ENCODE measurements at regions of chr20 and their contacts with region 1.

Region 1: GRCh38 chr20:33810885-33811777 is at the start of gene CHMP4B:
- DNase-seq: peak; percentile 97 to 99 (median 99)
- ATAC-seq: peak; percentile 97
- H3K4me3 ChIP-seq: peak within 1 kb of the TSS; percentile 77
- H3K4me3 Mint-ChIP-seq: peak within 1 kb of the TSS; percentile 99
- H3K27ac ChIP-seq: peak within 1 kb of the TSS; percentile 58 to 73
- H3K27ac Mint-ChIP-seq: peak within 1 kb of the TSS; percentile 93
- H3K4me1 ChIP-seq: peaks cover 40% of the 10 kb centered on the region
- H3K4me1 Mint-ChIP-seq: peaks cover 47% of the 10 kb centered on the region
- H3K27me3 ChIP-seq: no peaks in the 10 kb centered on the region
- H3K27me3 Mint-ChIP-seq: no peaks in the 10 kb centered on the region
- CTCF ChIP-seq: no peak
- total RNA-seq, gene CHMP4B: 55.5 to 56.1 TPM

Region 2: DNA sequence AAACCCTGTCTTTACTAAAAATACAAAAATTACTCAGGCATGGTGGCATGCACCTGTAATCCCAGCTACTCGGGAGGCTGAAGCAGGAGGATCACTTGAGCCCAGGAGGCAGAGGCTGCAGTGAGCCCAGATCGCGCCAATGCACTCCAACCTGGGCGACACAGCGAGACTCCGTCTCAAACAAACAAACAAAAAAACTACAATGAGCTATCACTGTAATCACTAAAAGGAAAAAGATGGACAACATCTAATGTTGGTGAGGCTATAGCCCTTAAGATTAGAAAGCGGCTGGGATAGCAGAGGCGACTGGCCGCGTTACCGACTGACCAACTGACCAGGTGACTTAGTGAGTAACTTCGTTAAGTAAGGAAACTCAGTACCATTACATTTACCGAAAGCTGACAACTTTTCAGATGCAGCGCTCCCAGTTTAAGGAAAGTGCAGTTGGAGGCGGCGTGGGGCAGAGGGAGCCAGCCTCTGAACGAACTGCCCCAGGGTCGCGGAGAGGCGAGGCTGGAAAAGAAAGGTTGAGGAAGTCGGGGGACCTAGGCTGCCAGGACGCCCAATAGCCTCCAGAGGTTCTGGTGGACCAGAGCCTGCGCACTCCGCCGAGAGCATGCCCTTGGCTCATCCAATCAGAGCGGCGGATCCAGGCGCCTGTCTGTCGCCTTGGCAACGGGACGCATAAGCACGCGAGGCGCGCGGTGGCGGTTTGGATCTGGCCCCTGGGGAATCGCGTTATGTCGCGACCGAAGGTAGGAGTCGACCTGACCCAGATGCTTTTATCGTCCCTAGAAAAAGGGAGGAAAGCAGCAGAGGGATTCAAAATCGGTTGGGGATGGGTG is 1931.8 kb before region 1 on chr20:
- CTCF ChIA-PET with region 1: no interaction called
- POLR2A ChIA-PET with region 1: no interaction called
- intact Hi-C with region 1: loop called in 1 of 2 experiments (anchors 5 kb)
- DNase-seq: peak; percentile 50 to 90 (median 74)
- ATAC-seq: peak; percentile 84
- H3K4me3 ChIP-seq: peak overlapping the region; percentile 59 to 73
- H3K4me3 Mint-ChIP-seq: peak overlapping the region; percentile 91
- H3K27ac ChIP-seq: no peak overlapping the region
- H3K27ac Mint-ChIP-seq: peak overlapping the region; percentile 63
- H3K4me1 ChIP-seq: no peaks in the 10 kb centered on the region
- H3K4me1 Mint-ChIP-seq: peaks cover 11% of the 10 kb centered on the region
- H3K27me3 ChIP-seq: no peaks in the 10 kb centered on the region
- H3K27me3 Mint-ChIP-seq: peaks cover 3% of the 10 kb centered on the region
- CTCF ChIP-seq: no peak

Region 3: DNA sequence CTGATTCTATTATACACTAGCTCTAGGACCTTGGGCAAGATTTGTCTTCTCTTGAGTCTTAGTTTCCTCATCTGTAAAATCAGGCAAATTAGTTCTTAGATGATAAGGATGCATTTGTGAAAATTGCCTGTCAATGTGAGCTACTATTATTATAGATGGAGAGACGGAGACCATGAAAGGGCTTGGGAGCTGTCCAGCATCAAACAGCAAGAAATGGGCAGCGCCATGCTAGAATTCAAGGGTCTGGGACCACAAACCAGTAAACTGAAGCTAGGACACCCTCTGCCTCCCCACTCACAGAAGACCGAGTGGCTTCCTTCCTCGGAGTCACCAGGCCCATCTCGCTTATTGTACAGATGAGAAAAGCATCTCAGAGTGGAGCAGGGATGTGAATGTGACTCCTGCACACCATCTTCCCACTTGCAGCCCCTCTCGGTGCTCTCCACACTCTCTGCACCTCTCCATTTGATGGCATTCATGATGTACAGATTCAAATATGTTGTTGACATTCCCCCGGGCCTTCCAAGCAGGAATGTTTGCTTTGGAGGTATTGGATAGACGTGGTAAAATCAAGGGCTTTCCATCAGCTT is 618.1 kb before region 1 on chr20:
- CTCF ChIA-PET with region 1: no interaction called
- POLR2A ChIA-PET with region 1: no interaction called
- intact Hi-C with region 1: no loop called
- DNase-seq: no peak
- ATAC-seq: no peak
- H3K4me3 ChIP-seq: no peak overlapping the region
- H3K4me3 Mint-ChIP-seq: no peak overlapping the region
- H3K27ac ChIP-seq: no peak overlapping the region
- H3K27ac Mint-ChIP-seq: no peak overlapping the region
- H3K4me1 ChIP-seq: no peaks in the 10 kb centered on the region
- H3K4me1 Mint-ChIP-seq: no peaks in the 10 kb centered on the region
- H3K27me3 ChIP-seq: no peaks in the 10 kb centered on the region
- H3K27me3 Mint-ChIP-seq: peaks cover 6% of the 10 kb centered on the region
- CTCF ChIP-seq: no peak

Region 4: GRCh38 chr20:33443512-33444239 is 367.5 kb before region 1 on chr20 and contains the start of gene SNTA1:
- CTCF ChIA-PET with region 1: no interaction called
- POLR2A ChIA-PET with region 1: no interaction called
- intact Hi-C with region 1: loop called in 1 of 2 experiments (anchors 2 kb)
- DNase-seq: peak; percentile 67 to 90 (median 87)
- ATAC-seq: peak; percentile 69
- H3K4me3 ChIP-seq: peak within 1 kb of the TSS; percentile 85 to 97
- H3K4me3 Mint-ChIP-seq: peak within 1 kb of the TSS; percentile 94
- H3K27ac ChIP-seq: peak within 1 kb of the TSS; percentile 59 to 66
- H3K27ac Mint-ChIP-seq: peak within 1 kb of the TSS; percentile 92
- H3K4me1 ChIP-seq: peaks cover 16% of the 10 kb centered on the region
- H3K4me1 Mint-ChIP-seq: peaks cover 21% of the 10 kb centered on the region
- H3K27me3 ChIP-seq: no peaks in the 10 kb centered on the region
- H3K27me3 Mint-ChIP-seq: no peaks in the 10 kb centered on the region
- CTCF ChIP-seq: no peak
- total RNA-seq, gene SNTA1: 3.9 to 5.5 TPM

Region 5: GRCh38 chr20:33666293-33667244 is 144.6 kb before region 1 on chr20 and contains the start of gene ACTL10:
- CTCF ChIA-PET with region 1: no interaction called
- POLR2A ChIA-PET with region 1: no interaction called
- intact Hi-C with region 1: loop called in 1 of 2 experiments (anchors 1 kb)
- DNase-seq: peak; percentile 53 to 90 (median 78)
- ATAC-seq: peak; percentile 47
- H3K4me3 ChIP-seq: peak within 1 kb of the TSS; percentile 73 to 86
- H3K4me3 Mint-ChIP-seq: peak within 1 kb of the TSS; percentile 96
- H3K27ac ChIP-seq: peak within 1 kb of the TSS; percentile 25 to 80
- H3K27ac Mint-ChIP-seq: peak within 1 kb of the TSS; percentile 93
- H3K4me1 ChIP-seq: peaks cover 28% of the 10 kb centered on the region
- H3K4me1 Mint-ChIP-seq: peaks cover 39% of the 10 kb centered on the region
- H3K27me3 ChIP-seq: no peaks in the 10 kb centered on the region
- H3K27me3 Mint-ChIP-seq: no peaks in the 10 kb centered on the region
- CTCF ChIP-seq: no peak
- total RNA-seq, gene ACTL10: 0.65 to 0.75 TPM

Region 6: GRCh38 chr20:33826270-33826897 is 15.3 kb after region 1 on chr20:
- CTCF ChIA-PET with region 1: interaction called, 3 read pairs
- POLR2A ChIA-PET with region 1: interaction called, 11 read pairs
- intact Hi-C with region 1: no loop called
- DNase-seq: no peak
- ATAC-seq: no peak
- H3K4me3 ChIP-seq: no peak overlapping the region
- H3K4me3 Mint-ChIP-seq: no peak overlapping the region
- H3K27ac ChIP-seq: no peak overlapping the region
- H3K27ac Mint-ChIP-seq: peak overlapping the region; percentile 69
- H3K4me1 ChIP-seq: peaks cover 38% of the 10 kb centered on the region
- H3K4me1 Mint-ChIP-seq: peaks cover 74% of the 10 kb centered on the region
- H3K27me3 ChIP-seq: no peaks in the 10 kb centered on the region
- H3K27me3 Mint-ChIP-seq: no peaks in the 10 kb centered on the region
- CTCF ChIP-seq: no peak

Region 7: DNA sequence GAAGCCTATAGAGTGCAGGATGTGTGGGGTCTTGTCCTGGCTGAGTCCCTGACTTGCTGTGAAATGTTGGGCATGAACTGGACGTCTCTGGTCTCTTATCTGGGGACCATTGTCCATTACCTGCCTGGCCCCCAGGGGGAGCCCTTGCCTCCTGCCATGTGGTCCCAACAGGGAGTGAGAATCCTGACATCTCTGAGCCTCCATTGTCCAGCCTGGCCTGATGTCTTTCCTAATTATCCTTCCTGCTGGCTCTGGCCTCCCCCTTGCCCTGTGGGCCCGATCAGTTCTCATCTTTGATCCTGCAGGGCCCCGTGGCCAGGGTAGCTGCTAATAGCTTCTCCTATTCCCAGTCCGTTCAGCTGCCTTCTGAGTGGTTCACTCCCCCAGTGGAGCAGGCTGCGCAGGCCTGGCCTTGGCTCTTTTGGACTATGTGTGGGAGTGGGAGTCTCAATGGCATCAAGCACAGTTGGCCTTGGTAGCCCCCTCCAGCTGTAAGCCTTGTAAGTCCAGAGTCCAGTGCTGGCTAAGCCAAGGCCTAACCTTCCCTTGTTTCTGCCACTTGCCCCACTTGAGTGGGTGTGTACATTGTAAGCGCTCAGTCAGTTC is 104.7 kb after region 1 on chr20:
- CTCF ChIA-PET with region 1: interaction called, 10 read pairs
- POLR2A ChIA-PET with region 1: no interaction called
- intact Hi-C with region 1: no loop called
- DNase-seq: peak; percentile 24 to 70 (median 57)
- ATAC-seq: peak; percentile 53
- H3K4me3 ChIP-seq: no peak overlapping the region
- H3K4me3 Mint-ChIP-seq: no peak overlapping the region
- H3K27ac ChIP-seq: no peak overlapping the region
- H3K27ac Mint-ChIP-seq: no peak overlapping the region
- H3K4me1 ChIP-seq: no peaks in the 10 kb centered on the region
- H3K4me1 Mint-ChIP-seq: peaks cover 12% of the 10 kb centered on the region
- H3K27me3 ChIP-seq: no peaks in the 10 kb centered on the region
- H3K27me3 Mint-ChIP-seq: peaks cover 1% of the 10 kb centered on the region
- CTCF ChIP-seq: peak; percentile 63

Region 8: DNA sequence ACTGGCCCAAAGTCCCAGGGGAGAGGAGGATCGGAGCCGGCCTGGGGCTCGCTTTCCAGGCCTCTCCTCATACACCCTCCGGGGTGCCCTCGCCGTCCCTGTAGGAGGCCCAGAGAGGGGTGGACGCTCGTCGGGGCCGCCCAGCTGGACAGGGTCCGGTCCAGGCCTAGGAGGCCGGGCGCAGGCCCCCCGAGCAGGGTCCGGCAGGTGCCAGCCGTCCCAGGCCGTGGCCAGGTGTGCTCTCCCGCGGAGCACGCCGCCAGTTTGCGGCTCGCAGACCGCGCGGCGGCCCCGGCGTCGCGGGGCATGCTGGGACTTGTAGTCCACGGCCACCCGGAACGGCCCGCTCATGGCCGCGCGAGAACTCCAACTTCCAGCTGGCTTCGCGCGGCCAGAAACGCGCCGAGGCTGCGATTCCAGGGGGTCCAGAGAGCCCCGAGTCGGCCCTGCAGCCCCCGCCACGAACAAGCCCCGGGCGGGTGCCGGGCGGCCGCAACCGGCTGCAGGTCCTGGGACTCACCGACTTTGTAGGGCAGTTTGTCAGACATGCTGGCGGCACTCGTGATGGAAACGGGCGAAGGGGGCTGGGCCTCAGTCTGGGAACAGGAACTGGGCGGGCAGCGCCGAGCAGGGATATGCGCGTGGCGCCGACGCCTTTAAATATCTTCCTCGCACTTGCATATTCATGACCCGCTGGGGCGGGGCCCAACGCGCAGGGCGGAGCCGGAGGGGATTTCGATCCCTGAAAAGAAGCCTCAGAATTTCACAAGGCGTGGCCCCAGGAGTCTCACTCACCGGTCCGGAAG is 491.8 kb after region 1 on chr20 and contains the start of gene AHCY:
- CTCF ChIA-PET with region 1: no interaction called
- POLR2A ChIA-PET with region 1: no interaction called
- intact Hi-C with region 1: loop called in 1 of 2 experiments (anchors 2 kb)
- DNase-seq: peak; percentile 76 to 96 (median 91)
- ATAC-seq: peak; percentile 94
- H3K4me3 ChIP-seq: peak within 1 kb of the TSS; percentile 69 to 92
- H3K4me3 Mint-ChIP-seq: peak within 1 kb of the TSS; percentile 96
- H3K27ac ChIP-seq: peak within 1 kb of the TSS; percentile 67 to 86
- H3K27ac Mint-ChIP-seq: peak within 1 kb of the TSS; percentile 94
- H3K4me1 ChIP-seq: no peaks in the 10 kb centered on the region
- H3K4me1 Mint-ChIP-seq: peaks cover 17% of the 10 kb centered on the region
- H3K27me3 ChIP-seq: no peaks in the 10 kb centered on the region
- H3K27me3 Mint-ChIP-seq: no peaks in the 10 kb centered on the region
- CTCF ChIP-seq: no peak
- total RNA-seq, gene AHCY: 16.1 to 17.8 TPM

Region 9: GRCh38 chr20:34604980-34605788 is 794.1 kb after region 1 on chr20:
- CTCF ChIA-PET with region 1: no interaction called
- POLR2A ChIA-PET with region 1: no interaction called
- intact Hi-C with region 1: no loop called
- DNase-seq: no peak
- ATAC-seq: no peak
- H3K4me3 ChIP-seq: no peak overlapping the region
- H3K4me3 Mint-ChIP-seq: no peak overlapping the region
- H3K27ac ChIP-seq: no peak overlapping the region
- H3K27ac Mint-ChIP-seq: no peak overlapping the region
- H3K4me1 ChIP-seq: no peaks in the 10 kb centered on the region
- H3K4me1 Mint-ChIP-seq: no peaks in the 10 kb centered on the region
- H3K27me3 ChIP-seq: no peaks in the 10 kb centered on the region
- H3K27me3 Mint-ChIP-seq: no peaks in the 10 kb centered on the region
- CTCF ChIP-seq: no peak

Measured in CD8-positive, alpha-beta T cell (primary cell).